HepG2 (cell line): ENCODE measurements at regions of chr3 and their contacts with region 1.

Region 1: GRCh38 chr3:138941259-138941885 is 5.6 kb downstream of the FOXL2 start:
- DNase-seq: peak; percentile 44
- ATAC-seq: peak; percentile 73
- H3K4me3 ChIP-seq: no peak overlapping the region
- H3K27ac ChIP-seq: no peak overlapping the region
- H3K4me1 ChIP-seq: peaks cover 27% of the 10 kb centered on the region
- H3K27me3 ChIP-seq: peaks cover 21 to 90% of the 10 kb centered on the region in 2 experiments
- CTCF ChIP-seq: peak; percentile 79
- EP300 ChIP-seq: no peak
- POLR2A ChIP-seq: no peak
- RAD21 ChIP-seq: peak; percentile 69

Region 2: GRCh38 chr3:138834359-138835212 is 106.8 kb before region 1 on chr3 and contains the start of gene PIK3CB:
- CTCF ChIA-PET with region 1: no interaction called
- POLR2A ChIA-PET with region 1: no interaction called
- in situ Hi-C with region 1: no loop called
- intact Hi-C with region 1: no loop called
- DNase-seq: peak; percentile 72
- ATAC-seq: peak; percentile 95
- H3K4me3 ChIP-seq: peak within 1 kb of the TSS; percentile 80 to 94 (median 86)
- H3K27ac ChIP-seq: peak within 1 kb of the TSS; percentile 95
- H3K4me1 ChIP-seq: peaks cover 39% of the 10 kb centered on the region
- H3K27me3 ChIP-seq: no peaks in the 10 kb centered on the region; a peak in 1 of 5 replicates
- CTCF ChIP-seq: peak; percentile 72
- EP300 ChIP-seq: no peak
- POLR2A ChIP-seq: peak; percentile 91 to 92
- RAD21 ChIP-seq: peak; percentile 84
- total RNA-seq, gene PIK3CB: 6.6 and 18.6 TPM in 2 replicates

Region 3: DNA sequence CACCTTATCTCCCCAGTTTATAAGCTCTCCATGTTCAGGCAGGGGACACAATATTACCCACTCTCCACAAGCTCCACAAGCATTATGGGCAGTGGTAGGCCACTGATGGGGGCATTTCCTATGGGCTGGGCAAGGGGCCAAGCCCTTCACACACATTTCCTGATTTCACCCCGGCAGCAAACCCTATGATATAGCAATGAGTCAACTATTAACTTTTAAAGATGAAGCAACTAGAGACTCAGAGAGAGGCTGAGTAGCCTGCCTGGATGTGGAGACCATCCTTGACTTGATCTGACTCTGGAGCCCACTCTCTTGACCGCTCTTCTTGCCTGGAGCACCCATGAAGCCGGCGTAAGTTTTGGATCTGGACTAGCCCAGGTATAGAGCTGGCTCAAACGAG is 33.1 kb after region 1 on chr3:
- CTCF ChIA-PET with region 1: interaction called, 16 read pairs
- POLR2A ChIA-PET with region 1: interaction called, 3 read pairs
- in situ Hi-C with region 1: loop called (anchors 5 kb)
- intact Hi-C with region 1: loop called (anchors 1 kb)
- DNase-seq: no peak
- ATAC-seq: no peak; the same call in 2 of the 3 replicates
- H3K4me3 ChIP-seq: no peak overlapping the region
- H3K27ac ChIP-seq: no peak overlapping the region
- H3K4me1 ChIP-seq: 0 out of 2 replicates have a peak, but pooled peaks cover under 1% of the 10 kb centered on the region
- H3K27me3 ChIP-seq: peaks cover 0 to 16% of the 10 kb centered on the region in 2 experiments; a peak in 2 of 5 replicates
- CTCF ChIP-seq: no peak
- EP300 ChIP-seq: no peak
- POLR2A ChIP-seq: no peak
- RAD21 ChIP-seq: no peak